Spleen (tissue), 13 donors: ENCODE measurements at regions of chr7 and their contacts with region 1.

Region 1: GRCh38 chr7:100673300-100673941 is at the start of gene GNB2:
- DNase-seq: peak; percentile 100
- H3K4me3 ChIP-seq: peak within 1 kb of the TSS; percentile 86 to 98 (median 92)
- H3K27ac ChIP-seq: peak within 1 kb of the TSS; percentile 97 to 100 (median 99)
- H3K4me1 ChIP-seq: peaks cover 7 to 41% (median 33%) of the 10 kb centered on the region in 6 donors
- H3K27me3 ChIP-seq: no peaks in the 10 kb centered on the region
- CTCF ChIP-seq: peak in 4 of 11 experiments; percentile 9 to 36 (median 18)
- POLR2A ChIP-seq: peak in 2 of 3 donors; percentile 64 to 67
- total RNA-seq, gene GNB2: 207 to 342 (median 270) TPM

Region 2: DNA sequence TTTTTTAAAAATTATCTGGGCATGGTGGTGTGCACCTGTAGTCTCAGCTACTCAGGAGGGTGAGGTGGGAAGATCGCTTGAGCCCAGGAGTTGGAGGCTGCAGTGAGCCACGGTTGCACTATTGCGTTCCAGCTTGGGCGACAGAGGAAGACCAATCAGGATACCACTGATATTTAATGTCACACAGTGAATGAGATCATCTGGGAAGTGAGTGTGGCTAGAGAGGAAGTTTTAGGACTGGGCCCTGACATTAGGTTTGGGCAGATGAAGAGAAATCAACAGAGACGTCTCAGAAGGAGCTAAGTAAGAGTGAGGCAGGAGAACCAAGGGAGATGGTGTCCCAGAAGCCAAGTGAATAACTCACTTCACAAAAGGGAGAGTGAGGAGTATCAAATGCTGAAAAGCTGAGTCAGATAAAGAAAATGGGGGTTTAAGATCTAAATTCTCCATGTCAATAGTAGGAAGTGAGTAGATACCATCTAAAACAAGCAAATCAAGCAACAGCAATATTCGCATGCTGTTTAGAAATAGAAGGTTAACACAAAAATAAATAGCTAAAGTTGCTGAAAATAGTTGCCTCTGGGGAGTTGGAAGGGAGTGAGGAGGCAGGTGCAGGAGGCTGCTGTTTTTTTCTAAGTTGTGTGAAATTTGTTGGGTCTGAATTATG is 288.7 kb before region 1 on chr7:
- intact Hi-C with region 1: no loop called
- DNase-seq: no peak
- H3K4me3 ChIP-seq: no peak overlapping the region
- H3K27ac ChIP-seq: peak overlapping the region in 3 of 8 donors; percentile 21 to 47 (median 21)
- H3K4me1 ChIP-seq: peaks cover 0 to 40% (median 9%) of the 10 kb centered on the region in 6 donors
- H3K27me3 ChIP-seq: no peaks in the 10 kb centered on the region
- CTCF ChIP-seq: no peak
- POLR2A ChIP-seq: no peak

Region 3: DNA sequence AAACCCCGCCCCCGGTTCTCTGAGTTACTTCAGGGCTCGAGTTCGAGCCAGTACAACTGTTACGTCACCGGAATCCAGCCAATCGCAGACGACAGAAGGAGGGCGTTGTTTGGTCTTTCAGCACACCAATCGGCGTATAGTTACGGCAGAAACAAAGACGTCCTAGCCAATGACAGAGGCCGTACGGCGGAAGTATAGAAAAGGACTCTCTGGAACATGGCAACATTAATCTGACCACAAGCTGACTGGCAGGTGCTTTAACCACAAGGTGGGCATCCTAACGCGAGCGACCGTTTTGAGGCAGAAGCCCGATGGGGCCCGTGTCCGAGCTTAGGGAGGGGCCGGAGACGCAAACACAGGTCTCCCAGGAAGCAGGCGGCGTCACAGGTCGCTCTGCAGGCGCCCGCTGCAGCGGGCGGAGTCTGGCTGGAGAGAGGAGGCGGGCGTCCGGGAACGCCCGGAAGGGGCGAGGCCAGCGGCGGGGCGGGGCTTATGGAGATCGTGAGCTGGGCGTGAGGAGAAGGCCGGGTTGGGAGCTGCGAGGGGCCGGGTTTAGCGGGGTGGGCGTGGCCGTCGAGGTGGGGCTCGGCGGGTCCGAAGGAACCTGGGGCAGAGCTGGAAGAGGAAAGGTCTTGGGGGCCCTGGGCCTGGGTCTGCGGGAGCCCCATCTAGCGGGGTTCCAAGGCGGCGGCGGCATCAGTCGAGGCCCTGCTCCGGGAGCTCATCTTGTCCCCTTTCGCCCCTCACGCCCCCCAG is 61.3 kb before region 1 on chr7 and contains the start of gene MOSPD3:
- intact Hi-C with region 1: loop called (anchors 10 kb)
- DNase-seq: peak; percentile 100
- H3K4me3 ChIP-seq: peak within 1 kb of the TSS; percentile 60 to 83 (median 66)
- H3K27ac ChIP-seq: peak within 1 kb of the TSS; percentile 93 to 98 (median 95)
- H3K4me1 ChIP-seq: peaks cover 7 to 26% (median 22%) of the 10 kb centered on the region in 6 donors
- H3K27me3 ChIP-seq: no peaks in the 10 kb centered on the region
- CTCF ChIP-seq: peak in 2 of 11 experiments; percentile 17 to 22
- POLR2A ChIP-seq: peak in 2 of 3 donors; percentile 56 to 77
- total RNA-seq, gene MOSPD3: 13.4 to 20.4 (median 16.0) TPM

Region 4: GRCh38 chr7:100789055-100789454 is 115.6 kb after region 1 on chr7:
- intact Hi-C with region 1: no loop called
- DNase-seq: no peak
- H3K4me3 ChIP-seq: no peak overlapping the region
- H3K27ac ChIP-seq: no peak overlapping the region
- H3K4me1 ChIP-seq: no peaks in the 10 kb centered on the region
- H3K27me3 ChIP-seq: peaks cover 0 to 74% (median 4%) of the 10 kb centered on the region in 7 donors
- CTCF ChIP-seq: no peak
- POLR2A ChIP-seq: no peak